Gastrocnemius medialis (tissue), 4 donors: ENCODE measurements at regions of chr7 and their contacts with region 1.

Region 1: DNA sequence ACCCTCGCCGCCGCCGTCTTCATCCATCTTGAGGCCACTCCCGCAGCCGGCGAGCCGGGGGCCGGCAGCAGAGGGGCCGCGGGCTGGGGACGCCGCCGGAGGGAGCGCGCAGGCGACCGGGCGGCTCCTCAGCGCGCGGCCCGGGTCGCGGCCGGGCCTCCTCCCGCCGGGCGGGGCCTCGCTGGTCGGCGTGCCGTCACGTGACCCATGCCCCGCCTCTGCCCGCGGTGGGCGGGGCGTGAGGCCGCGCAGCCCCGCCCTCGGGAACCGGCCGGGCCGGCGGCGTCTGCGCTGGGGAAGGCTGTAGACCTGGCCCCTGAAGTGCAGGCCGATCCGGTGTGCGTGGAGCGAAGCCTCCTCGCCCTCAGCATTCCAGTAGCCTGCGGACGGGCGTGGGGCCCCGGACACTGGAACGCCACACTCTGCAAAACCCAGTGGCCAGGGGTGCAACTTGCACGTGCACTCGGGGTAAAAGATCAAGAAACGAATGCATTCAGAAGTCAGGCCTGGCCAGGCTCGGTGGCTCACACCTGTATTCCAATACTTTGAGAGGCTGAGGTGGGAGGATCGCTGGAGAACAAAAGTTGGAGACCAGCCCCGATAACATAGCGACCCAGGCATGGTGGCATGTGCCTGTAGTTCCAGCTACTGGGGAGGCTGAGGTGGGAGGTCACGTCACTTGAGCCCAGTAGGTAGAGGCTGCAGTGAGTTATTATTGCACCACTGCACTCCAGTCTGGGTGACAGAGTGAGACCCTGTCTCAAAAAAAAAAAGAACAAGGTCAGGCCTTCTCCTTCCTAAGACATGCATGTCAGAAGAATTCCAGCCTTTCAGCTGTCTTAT is at the start of gene CYTH3:
- DNase-seq: peak; percentile 51 to 73
- ATAC-seq: peak; percentile 88 to 89
- H3K4me3 ChIP-seq: peak within 1 kb of the TSS; percentile 70 to 98 (median 84)
- H3K27ac ChIP-seq: peak within 1 kb of the TSS; percentile 77 to 92 (median 80)
- H3K4me1 ChIP-seq: peaks cover 20 to 36% of the 10 kb centered on the region in 2 donors
- H3K27me3 ChIP-seq: no peaks in the 10 kb centered on the region
- CTCF ChIP-seq: peak in 1 of 5 experiments; percentile 33
- POLR2A ChIP-seq: peak; percentile 90 to 93
- total RNA-seq, gene CYTH3: 14.3 to 20.2 (median 16.7) TPM

Region 2: DNA sequence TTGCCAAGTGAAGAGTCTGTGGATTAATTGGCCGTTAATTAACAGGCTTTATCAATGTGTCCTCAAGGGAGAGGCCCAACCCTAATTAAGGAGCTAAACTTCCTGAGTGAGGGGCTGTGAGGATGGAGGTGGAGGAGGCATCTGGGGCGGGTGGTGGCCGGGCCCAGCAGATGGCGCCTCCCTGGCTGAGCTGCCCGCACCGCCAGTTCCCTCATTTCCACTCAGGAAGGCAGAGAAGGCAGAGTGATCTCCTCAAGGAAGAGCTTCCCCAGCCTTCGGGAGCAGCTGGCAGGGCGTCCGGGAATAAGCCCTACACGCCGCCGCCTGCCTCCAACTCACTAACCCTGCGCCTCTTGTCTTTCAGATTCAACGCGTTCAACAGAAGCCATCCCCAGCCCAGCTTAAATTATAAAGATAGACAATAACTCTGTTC is 112.5 kb before region 1 on chr7:
- in situ Hi-C with region 1: no loop called
- intact Hi-C with region 1: loop called (anchors 2 kb)
- DNase-seq: peak; percentile 41 to 70
- ATAC-seq: peak; percentile 71 to 81
- H3K4me3 ChIP-seq: no peak overlapping the region
- H3K27ac ChIP-seq: peak overlapping the region; percentile 32 to 60 (median 42)
- H3K4me1 ChIP-seq: peaks cover 4 to 15% of the 10 kb centered on the region in 2 donors
- H3K27me3 ChIP-seq: no peaks in the 10 kb centered on the region
- CTCF ChIP-seq: peak; percentile 62 to 83 (median 75)
- POLR2A ChIP-seq: no peak

Region 3: DNA sequence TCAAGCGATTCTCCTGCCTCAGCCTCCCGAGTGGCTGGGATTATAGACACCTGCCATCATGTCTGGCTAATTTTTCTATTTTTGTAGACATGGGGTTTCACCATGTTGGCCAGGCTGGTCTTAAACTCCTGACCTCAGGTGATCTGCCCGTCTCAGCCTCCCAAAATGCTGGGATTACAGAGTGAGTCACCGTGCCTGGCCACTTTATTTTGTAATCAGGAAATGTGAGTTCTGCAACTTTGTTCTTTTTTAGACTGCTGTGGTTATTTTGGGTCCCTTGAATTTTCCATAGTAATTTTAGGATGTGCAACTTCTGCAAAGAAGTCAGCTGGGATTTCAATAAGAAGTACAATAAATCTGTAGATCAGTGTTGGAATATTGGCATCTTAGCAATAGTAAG is 97.1 kb before region 1 on chr7:
- in situ Hi-C with region 1: no loop called
- intact Hi-C with region 1: loop called (anchors 5 kb)
- DNase-seq: peak; percentile 53 to 79
- ATAC-seq: peak; percentile 72 to 78
- H3K4me3 ChIP-seq: no peak overlapping the region
- H3K27ac ChIP-seq: peak overlapping the region; percentile 14 to 77 (median 51)
- H3K4me1 ChIP-seq: peaks cover 27 to 36% of the 10 kb centered on the region in 2 donors
- H3K27me3 ChIP-seq: no peaks in the 10 kb centered on the region
- CTCF ChIP-seq: no peak
- POLR2A ChIP-seq: peak in 1 of 2 donors; percentile 24

Region 4: DNA sequence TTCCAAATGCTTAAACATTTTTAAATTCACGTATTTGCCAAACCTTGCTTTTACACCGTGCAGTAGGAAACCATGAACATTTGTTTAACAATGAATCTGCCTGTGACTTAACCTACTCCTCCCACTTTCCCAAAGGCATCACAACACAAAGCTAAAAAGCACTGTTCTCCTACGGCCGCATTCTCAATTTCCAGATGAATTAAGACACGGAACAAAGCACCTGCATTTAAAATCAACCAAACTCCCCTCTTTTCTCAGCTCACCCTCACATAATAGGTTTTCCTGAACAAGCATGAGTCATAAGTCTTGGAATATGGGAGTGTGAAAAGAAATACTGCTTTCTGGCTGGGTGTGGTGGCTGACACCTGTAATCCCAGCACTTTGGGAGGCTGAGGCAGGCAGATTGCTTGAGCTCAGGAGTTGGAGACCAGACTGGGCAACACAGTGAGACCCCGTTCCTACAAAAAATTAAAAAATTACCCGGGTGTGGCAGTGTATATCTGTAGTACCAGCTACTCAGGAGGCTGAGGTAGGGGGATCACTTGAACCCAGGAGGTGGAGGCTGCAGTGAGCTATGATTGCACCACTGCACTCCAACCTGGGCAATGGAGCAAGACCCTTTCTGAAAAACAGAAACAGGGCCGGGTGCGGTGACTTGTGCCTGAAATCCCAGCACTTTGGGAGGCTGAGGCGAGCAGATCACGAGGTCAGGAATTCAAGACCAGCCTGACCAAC is 51.4 kb after region 1 on chr7:
- in situ Hi-C with region 1: loop called in 1 of 4 experiments (anchors 10 kb)
- intact Hi-C with region 1: no loop called
- DNase-seq: no peak
- ATAC-seq: no peak
- H3K4me3 ChIP-seq: no peak overlapping the region
- H3K27ac ChIP-seq: no peak overlapping the region
- H3K4me1 ChIP-seq: peaks cover 0 to 5% of the 10 kb centered on the region in 2 donors
- H3K27me3 ChIP-seq: no peaks in the 10 kb centered on the region
- CTCF ChIP-seq: no peak
- POLR2A ChIP-seq: no peak